Colonic mucosa (tissue), 4 donors: ENCODE measurements at regions of chr9 and their contacts with region 1.

Region 1: GRCh38 chr9:34072868-34073590 is 24.3 kb upstream of the UBAP2 start:
- DNase-seq: peak; percentile 63
- H3K4me3 ChIP-seq: no peak overlapping the region
- H3K27ac ChIP-seq: no peak overlapping the region
- H3K4me1 ChIP-seq: peaks cover 10% of the 10 kb centered on the region
- H3K27me3 ChIP-seq: no peaks in the 10 kb centered on the region
- CTCF ChIP-seq: no peak

Region 2: GRCh38 chr9:33924978-33925797 is 147.8 kb before region 1 on chr9:
- intact Hi-C with region 1: loop called (anchors 5 kb)
- DNase-seq: peak; percentile 48
- H3K4me3 ChIP-seq: no peak overlapping the region
- H3K27ac ChIP-seq: no peak overlapping the region
- H3K4me1 ChIP-seq: no peaks in the 10 kb centered on the region
- H3K27me3 ChIP-seq: no peaks in the 10 kb centered on the region
- CTCF ChIP-seq: peak; percentile 46

Region 3: DNA sequence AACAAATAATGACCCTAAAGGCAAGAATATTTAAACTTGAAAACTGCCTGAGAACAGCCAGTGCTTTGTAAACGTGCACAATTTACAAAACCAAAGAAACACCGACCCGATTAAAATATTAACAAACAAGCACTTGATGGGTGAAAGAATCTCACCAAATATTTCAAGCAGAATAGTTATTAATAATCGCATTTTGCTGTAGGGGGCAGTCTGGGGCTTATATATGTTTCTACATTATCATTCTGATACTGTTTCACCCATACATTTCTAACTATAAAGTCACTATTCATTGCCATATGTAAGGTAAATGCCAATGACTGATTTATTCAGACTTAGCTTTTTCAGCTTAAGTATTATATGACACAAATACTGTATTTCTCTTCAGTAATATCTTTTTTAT is 62.0 kb before region 1 on chr9:
- intact Hi-C with region 1: loop called (anchors 10 kb)
- DNase-seq: no peak
- H3K4me3 ChIP-seq: no peak overlapping the region
- H3K27ac ChIP-seq: no peak overlapping the region
- H3K4me1 ChIP-seq: no peaks in the 10 kb centered on the region
- H3K27me3 ChIP-seq: no peaks in the 10 kb centered on the region
- CTCF ChIP-seq: no peak